H1 (cell line): ENCODE measurements at regions of chr14 and their contacts with region 1.

Region 1: GRCh38 chr14:68862954-68863594 is 70.2 kb upstream of the ZFP36L1 start:
- DNase-seq: peak; percentile 47 to 86
- H3K4me3 ChIP-seq: no peak overlapping the region
- H3K27ac ChIP-seq: no peak overlapping the region
- H3K4me1 ChIP-seq: peaks cover 0 to 9% (median 0%) of the 10 kb centered on the region in 4 experiments; a peak in 2 of 7 replicates
- H3K27me3 ChIP-seq: no peaks in the 10 kb centered on the region
- CTCF ChIP-seq: peak; percentile 68 to 90 (median 80)
- EP300 ChIP-seq: no peak
- POLR2A ChIP-seq: no peak
- RAD21 ChIP-seq: peak; percentile 89 to 95

Region 2: DNA sequence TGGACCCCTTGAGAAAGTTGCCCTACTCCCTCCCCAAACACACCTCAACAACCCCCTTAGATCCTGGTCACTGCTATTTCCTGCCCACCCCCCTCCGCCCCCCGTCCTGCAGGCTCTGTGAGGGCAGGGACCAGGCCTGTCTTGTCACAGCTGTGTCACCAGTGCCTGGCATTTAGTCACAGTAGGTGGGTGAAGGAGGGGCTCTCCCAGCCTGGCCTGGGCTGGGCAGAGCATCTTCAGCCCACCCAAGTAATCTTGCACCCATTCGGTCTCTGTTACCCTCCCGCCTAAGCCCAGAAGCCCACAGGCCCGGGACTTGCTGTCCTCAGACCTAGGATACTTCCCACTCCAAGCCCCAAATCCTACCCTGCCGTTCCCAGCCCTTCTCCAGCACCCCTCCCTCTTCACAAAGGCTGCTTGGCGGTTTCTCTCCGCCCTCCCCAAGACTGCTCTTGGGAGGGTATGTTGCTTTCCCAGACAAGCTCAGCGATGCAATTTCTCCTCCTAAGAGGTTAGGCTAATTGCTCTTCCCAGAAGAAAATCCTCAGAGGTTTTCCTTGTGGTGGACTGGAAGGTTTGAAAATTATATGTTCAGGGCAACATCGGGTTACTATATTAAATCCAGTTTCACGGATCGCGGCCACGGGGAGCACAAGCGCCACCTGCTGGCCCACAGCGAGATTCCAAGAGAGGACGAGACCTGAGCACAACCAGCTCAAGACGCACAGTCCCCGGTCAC is 19.4 kb before region 1 on chr14:
- CTCF ChIA-PET with region 1: interaction called, 13 read pairs
- POLR2A ChIA-PET with region 1: interaction called, 3 read pairs
- DNase-seq: peak; percentile 50 to 89
- H3K4me3 ChIP-seq: peak overlapping the region; percentile 38 to 63 (median 56); a peak in 7 of 8 replicates
- H3K27ac ChIP-seq: no peak overlapping the region
- H3K4me1 ChIP-seq: peaks cover 0 to 6% (median 3%) of the 10 kb centered on the region in 4 experiments; a peak in 5 of 7 replicates
- H3K27me3 ChIP-seq: no peaks in the 10 kb centered on the region
- CTCF ChIP-seq: peak; percentile 78 to 93 (median 87)
- EP300 ChIP-seq: no peak
- POLR2A ChIP-seq: peak in 1 of 2 experiments; percentile 24; a peak in 1 of 3 replicates
- RAD21 ChIP-seq: peak; percentile 76 to 82

Region 3: DNA sequence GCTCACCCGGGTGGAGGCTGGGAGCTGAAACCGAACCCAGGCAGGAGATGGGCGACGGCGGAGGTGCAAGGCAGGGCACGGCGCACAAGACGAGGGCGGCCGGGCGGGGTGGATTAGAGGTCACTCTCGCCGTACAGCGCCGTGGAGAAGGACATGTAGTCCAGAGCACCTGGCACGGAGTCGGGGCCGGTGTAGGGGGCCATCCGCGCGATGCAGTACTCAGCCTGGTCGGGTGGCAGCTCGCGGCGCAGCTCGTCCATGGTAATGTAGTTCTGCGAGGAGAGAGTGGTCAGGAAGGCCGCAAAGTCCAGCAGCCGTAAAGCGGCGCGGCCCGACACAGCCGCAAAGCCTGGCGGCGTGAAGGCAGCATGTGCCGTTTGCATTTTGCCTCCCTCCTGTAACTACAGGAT is 11.7 kb after region 1 on chr14:
- CTCF ChIA-PET with region 1: interaction called, 25 read pairs
- POLR2A ChIA-PET with region 1: interaction called, 6 read pairs
- DNase-seq: no peak
- H3K4me3 ChIP-seq: no peak overlapping the region
- H3K27ac ChIP-seq: no peak overlapping the region
- H3K4me1 ChIP-seq: no peaks in the 10 kb centered on the region
- H3K27me3 ChIP-seq: no peaks in the 10 kb centered on the region
- CTCF ChIP-seq: no peak
- EP300 ChIP-seq: no peak
- POLR2A ChIP-seq: no peak
- RAD21 ChIP-seq: no peak

Region 4: GRCh38 chr14:68939893-68940613 is 77.0 kb after region 1 on chr14:
- CTCF ChIA-PET with region 1: interaction called, 19 read pairs
- POLR2A ChIA-PET with region 1: no interaction called
- DNase-seq: no peak
- H3K4me3 ChIP-seq: no peak overlapping the region
- H3K27ac ChIP-seq: no peak overlapping the region
- H3K4me1 ChIP-seq: peaks cover 2 to 40% (median 24%) of the 10 kb centered on the region in 4 experiments
- H3K27me3 ChIP-seq: no peaks in the 10 kb centered on the region
- CTCF ChIP-seq: no peak
- EP300 ChIP-seq: no peak
- POLR2A ChIP-seq: no peak
- RAD21 ChIP-seq: no peak

Region 5: DNA sequence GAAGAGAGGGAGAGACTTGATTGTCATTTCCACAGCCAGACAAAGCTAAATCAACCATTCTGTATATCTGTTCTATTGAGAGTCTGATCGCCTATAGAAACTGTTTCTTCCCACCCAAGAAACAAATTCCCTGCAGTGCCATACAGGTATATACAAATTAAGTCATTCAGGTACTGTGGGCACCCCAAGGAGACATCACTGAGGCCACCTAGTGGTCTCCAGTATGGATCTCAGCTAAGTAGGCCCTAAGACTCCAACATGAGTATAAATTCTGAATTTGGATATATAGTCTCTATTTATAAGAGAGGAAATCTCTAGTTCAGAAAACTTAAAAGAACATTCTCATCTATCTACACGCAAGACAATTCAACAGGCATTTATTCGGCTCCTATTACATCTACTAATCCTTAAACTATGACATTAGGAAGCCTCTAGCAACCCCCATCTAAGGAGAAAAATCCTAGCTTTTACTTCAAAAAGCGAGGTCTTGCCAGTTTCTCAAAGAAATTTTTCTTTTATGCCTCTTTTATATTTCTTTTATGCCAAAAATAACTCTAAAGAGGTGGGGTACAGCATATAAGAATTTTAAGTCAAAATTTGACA is 227.2 kb after region 1 on chr14:
- CTCF ChIA-PET with region 1: interaction called, 20 read pairs
- POLR2A ChIA-PET with region 1: no interaction called
- DNase-seq: no peak
- H3K4me3 ChIP-seq: no peak overlapping the region
- H3K27ac ChIP-seq: no peak overlapping the region
- H3K4me1 ChIP-seq: peaks cover 3 to 11% (median 5%) of the 10 kb centered on the region in 4 experiments; a peak in 5 of 7 replicates
- H3K27me3 ChIP-seq: no peaks in the 10 kb centered on the region
- CTCF ChIP-seq: peak; percentile 23 to 73 (median 71)
- EP300 ChIP-seq: no peak
- POLR2A ChIP-seq: no peak
- RAD21 ChIP-seq: peak; percentile 74 to 78

Region 6: DNA sequence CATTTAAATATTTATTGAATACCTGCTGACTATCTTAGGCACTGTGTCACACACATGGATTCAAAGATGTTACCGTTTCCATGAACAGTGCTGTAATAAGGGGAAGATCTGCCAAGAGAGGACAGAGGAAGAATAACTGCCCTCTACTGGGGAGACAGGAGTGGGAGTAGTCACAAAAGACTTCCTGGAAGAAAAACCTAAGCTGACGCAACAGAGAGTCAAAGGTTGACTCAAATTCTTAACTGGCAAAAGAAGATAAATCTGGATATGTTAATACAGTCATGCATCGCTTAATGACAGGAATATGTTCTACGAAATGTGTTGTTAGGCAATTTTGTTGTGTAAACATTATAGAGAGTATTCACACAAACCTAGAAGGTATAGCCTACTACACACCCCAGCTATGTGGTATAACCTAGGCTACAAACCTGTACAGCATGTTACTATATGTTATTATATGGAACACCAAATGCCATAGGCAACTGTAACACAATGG is 238.3 kb after region 1 on chr14:
- CTCF ChIA-PET with region 1: interaction called, 69 read pairs
- POLR2A ChIA-PET with region 1: no interaction called
- DNase-seq: no peak
- H3K4me3 ChIP-seq: no peak overlapping the region
- H3K27ac ChIP-seq: no peak overlapping the region
- H3K4me1 ChIP-seq: peaks cover 0 to 7% (median 3%) of the 10 kb centered on the region in 4 experiments; a peak in 3 of 7 replicates
- H3K27me3 ChIP-seq: no peaks in the 10 kb centered on the region
- CTCF ChIP-seq: peak in 2 of 3 experiments; percentile 40 to 55; a peak in 2 of 4 replicates
- EP300 ChIP-seq: no peak
- POLR2A ChIP-seq: no peak
- RAD21 ChIP-seq: peak; percentile 51 to 54

Region 7: DNA sequence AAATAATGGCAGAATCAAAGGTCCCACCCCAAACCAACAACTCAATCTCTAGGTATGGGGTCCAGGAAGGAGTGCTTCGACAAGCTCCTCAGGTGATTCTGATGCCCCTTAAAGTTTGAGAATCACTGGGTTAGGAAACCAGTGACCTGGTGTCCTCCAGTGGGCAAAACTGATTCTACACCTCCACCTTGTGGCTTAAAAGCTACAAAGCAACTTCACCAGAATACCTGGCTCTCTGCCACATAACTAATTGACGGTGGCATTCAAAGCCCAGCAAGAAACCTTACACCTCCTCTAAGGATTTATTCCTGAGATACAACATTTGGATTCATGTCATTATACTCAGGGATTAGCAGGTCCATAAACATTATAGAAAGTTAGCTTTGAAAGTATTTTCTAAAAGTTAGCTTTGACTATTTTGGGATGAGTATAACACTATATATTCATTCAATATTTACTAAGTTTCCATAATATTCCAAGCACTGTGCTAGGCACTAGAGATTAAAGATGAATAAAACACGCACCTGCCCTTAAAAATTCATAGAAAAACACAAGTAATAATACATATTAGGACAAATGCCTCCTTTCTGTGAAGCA is 244.4 kb after region 1 on chr14:
- CTCF ChIA-PET with region 1: interaction called, 69 read pairs
- POLR2A ChIA-PET with region 1: interaction called, 4 read pairs
- DNase-seq: no peak
- H3K4me3 ChIP-seq: no peak overlapping the region
- H3K27ac ChIP-seq: no peak overlapping the region
- H3K4me1 ChIP-seq: no peaks in the 10 kb centered on the region
- H3K27me3 ChIP-seq: no peaks in the 10 kb centered on the region
- CTCF ChIP-seq: peak in 2 of 3 experiments; percentile 83 to 91; a peak in 3 of 4 replicates
- EP300 ChIP-seq: no peak
- POLR2A ChIP-seq: no peak
- RAD21 ChIP-seq: peak; percentile 96